Panc1 (cell line): ENCODE measurements at regions of chr12 and their contacts with region 1.

Region 1: DNA sequence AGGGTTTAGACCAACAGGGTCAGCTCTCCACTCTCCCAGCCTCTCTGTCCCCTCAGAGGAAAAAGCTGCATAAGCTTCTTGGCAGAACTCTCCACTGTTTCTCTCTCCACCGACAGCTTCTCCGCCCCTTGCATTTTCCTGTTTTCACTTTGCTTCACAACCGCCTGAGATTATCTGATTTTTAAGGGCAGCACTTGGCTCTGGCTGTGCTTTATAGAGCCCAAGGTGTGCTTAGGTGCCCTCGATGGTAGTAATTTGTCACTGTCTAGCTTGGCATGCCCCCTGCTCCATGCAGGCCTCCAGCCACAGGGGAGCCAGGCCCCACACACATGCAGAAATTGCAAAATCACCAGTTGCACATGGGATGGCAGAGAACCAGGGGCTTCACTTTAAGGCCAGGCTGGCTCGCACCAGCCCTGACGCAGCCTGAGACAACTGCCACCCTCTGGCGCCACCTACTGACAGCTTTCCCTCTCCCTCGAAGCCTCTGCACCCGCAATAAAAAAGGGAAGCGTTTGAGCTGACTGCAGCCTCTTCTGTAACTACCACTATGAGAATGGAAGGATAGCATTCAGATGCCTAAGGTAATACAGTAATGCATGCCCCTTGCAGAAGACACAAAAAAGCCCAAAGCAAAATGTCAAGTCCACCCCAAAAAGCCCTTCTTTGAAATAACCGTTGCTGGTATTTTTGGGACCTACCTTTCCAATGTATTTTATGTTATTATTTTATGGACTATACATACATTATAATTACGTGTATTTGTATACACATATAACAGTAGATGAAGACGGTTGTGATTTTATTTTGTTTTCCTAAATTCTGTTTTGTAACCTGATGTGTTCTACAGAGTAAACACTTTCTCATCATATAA is 32.0 kb upstream of the RIMBP2 start:
- DNase-seq: peak; percentile 48
- ATAC-seq: peak; percentile 97
- H3K4me3 ChIP-seq: no peak overlapping the region
- H3K27ac ChIP-seq: no peak overlapping the region
- H3K4me1 ChIP-seq: no peaks in the 10 kb centered on the region
- H3K27me3 ChIP-seq: 0 out of 2 replicates have a peak, but pooled peaks cover 3% of the 10 kb centered on the region
- CTCF ChIP-seq: peak; percentile 94

Region 2: GRCh38 chr12:130401703-130402102 is 346.4 kb before region 1 on chr12:
- CTCF ChIA-PET with region 1: interaction called, 6 read pairs
- POLR2A ChIA-PET with region 1: no interaction called
- in situ Hi-C with region 1: loop called (anchors 10 kb)
- intact Hi-C with region 1: loop called (anchors 1 kb)
- DNase-seq: no peak
- ATAC-seq: peak; percentile 85
- H3K4me3 ChIP-seq: no peak overlapping the region
- H3K27ac ChIP-seq: no peak overlapping the region
- H3K4me1 ChIP-seq: no peaks in the 10 kb centered on the region
- H3K27me3 ChIP-seq: no peaks in the 10 kb centered on the region; the same call in 1 of the 2 replicates
- CTCF ChIP-seq: peak; percentile 55

Region 3: DNA sequence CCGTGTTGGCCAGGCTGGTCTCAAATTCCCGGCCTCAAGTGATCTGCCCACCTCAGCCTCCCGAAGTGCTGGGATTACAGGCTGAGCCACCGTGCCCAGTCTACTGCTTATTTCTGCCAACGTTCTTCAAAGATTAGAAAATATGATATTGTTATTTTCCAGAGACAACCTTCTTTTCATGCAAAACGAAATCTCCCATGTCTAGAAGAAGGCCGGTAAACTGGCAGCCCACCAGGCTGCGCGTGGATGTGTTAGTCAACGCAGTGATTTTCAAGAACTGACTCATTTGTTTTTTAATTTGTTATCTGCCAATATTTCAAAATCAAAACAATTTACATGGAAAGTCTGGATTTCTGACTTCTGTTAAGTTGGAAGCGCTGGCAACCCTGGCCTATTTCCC is 201.6 kb before region 1 on chr12:
- CTCF ChIA-PET with region 1: interaction called, 10 read pairs
- POLR2A ChIA-PET with region 1: no interaction called
- in situ Hi-C with region 1: no loop called
- intact Hi-C with region 1: no loop called
- DNase-seq: no peak
- ATAC-seq: no peak
- H3K4me3 ChIP-seq: no peak overlapping the region
- H3K27ac ChIP-seq: no peak overlapping the region
- H3K4me1 ChIP-seq: no peaks in the 10 kb centered on the region
- H3K27me3 ChIP-seq: no peaks in the 10 kb centered on the region; the same call in 1 of the 2 replicates
- CTCF ChIP-seq: no peak